PC-3 (cell line): ENCODE measurements at regions of chr9 and their contacts with region 1.

Region 1: GRCh38 chr9:85639675-85640186 is 102.0 kb downstream of the AGTPBP1 start:
- DNase-seq: no peak
- ATAC-seq: no peak
- H3K4me3 ChIP-seq: no peak overlapping the region
- H3K27ac ChIP-seq: no peak overlapping the region
- H3K4me1 ChIP-seq: no peaks in the 10 kb centered on the region
- H3K27me3 ChIP-seq: no peaks in the 10 kb centered on the region
- CTCF ChIP-seq: no peak

Region 2: GRCh38 chr9:85586684-85587083 is 53.0 kb before region 1 on chr9:
- CTCF ChIA-PET with region 1: no interaction called
- POLR2A ChIA-PET with region 1: no interaction called
- intact Hi-C with region 1: loop called (anchors 10 kb)
- DNase-seq: no peak
- ATAC-seq: no peak
- H3K4me3 ChIP-seq: no peak overlapping the region
- H3K27ac ChIP-seq: no peak overlapping the region
- H3K4me1 ChIP-seq: no peaks in the 10 kb centered on the region
- H3K27me3 ChIP-seq: no peaks in the 10 kb centered on the region
- CTCF ChIP-seq: no peak